ENCODE measurements at regions of chr20 and their contacts with region 1.

Region 1: DNA sequence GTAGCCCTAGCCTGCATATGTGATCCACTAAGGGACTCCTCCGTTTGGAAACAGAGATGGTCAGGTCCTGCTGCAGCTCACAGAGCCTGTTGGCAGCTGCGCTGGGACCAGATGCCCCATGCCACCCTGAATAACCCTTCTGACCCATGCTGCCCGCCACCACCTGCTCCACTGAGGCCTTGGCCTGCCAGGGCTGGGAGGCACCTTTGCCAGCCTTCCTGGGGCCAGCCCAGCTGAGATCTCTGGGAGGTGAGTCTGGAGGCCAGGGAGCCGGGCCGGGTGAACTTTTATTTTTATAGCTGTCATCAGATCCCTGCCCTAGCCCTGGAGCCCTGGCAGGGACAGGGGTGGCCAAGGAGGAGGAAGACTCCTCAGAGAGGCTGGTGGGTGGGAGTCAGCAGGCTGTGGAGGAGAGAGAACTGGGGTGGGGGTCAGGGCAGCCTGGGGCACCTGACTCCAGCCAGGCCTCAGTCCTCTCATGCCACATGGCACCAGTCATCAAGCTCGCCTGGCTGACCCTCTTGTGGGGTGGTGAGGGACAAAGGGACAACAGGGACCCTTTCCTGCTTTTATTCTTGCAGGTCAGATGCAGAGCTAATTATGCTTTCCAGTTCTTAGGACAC is 10.0 kb downstream of the CEBPB start:
- DNase-seq: no peak
- H3K4me3 ChIP-seq: no peak overlapping the region
- H3K4me3 Mint-ChIP-seq: no peak overlapping the region
- H3K27ac ChIP-seq: no peak overlapping the region
- H3K27ac Mint-ChIP-seq: peak overlapping the region in 1 of 7 donors; percentile 28
- H3K4me1 ChIP-seq: peaks cover 19 to 33% of the 10 kb centered on the region in 2 donors
- H3K4me1 Mint-ChIP-seq: peaks cover 45% of the 10 kb centered on the region
- H3K27me3 ChIP-seq: no peaks in the 10 kb centered on the region
- H3K27me3 Mint-ChIP-seq: peaks cover 0 to 2% (median 0%) of the 10 kb centered on the region in 3 donors
- CTCF ChIP-seq: no peak

Region 2: GRCh38 chr20:50215101-50215690 is 14.6 kb after region 1 on chr20:
- intact Hi-C with region 1: loop called (anchors 2 kb)
- DNase-seq: no peak
- H3K4me3 ChIP-seq: no peak overlapping the region
- H3K4me3 Mint-ChIP-seq: peak overlapping the region in 1 of 2 donors; percentile 49
- H3K27ac ChIP-seq: no peak overlapping the region
- H3K27ac Mint-ChIP-seq: peak overlapping the region in 4 of 7 donors; percentile 38 to 81 (median 63)
- H3K4me1 ChIP-seq: peaks cover 48 to 54% of the 10 kb centered on the region in 2 donors
- H3K4me1 Mint-ChIP-seq: peaks cover 71% of the 10 kb centered on the region
- H3K27me3 ChIP-seq: no peaks in the 10 kb centered on the region
- H3K27me3 Mint-ChIP-seq: peaks cover 0 to 17% (median 1%) of the 10 kb centered on the region in 3 donors
- CTCF ChIP-seq: no peak

Region 3: DNA sequence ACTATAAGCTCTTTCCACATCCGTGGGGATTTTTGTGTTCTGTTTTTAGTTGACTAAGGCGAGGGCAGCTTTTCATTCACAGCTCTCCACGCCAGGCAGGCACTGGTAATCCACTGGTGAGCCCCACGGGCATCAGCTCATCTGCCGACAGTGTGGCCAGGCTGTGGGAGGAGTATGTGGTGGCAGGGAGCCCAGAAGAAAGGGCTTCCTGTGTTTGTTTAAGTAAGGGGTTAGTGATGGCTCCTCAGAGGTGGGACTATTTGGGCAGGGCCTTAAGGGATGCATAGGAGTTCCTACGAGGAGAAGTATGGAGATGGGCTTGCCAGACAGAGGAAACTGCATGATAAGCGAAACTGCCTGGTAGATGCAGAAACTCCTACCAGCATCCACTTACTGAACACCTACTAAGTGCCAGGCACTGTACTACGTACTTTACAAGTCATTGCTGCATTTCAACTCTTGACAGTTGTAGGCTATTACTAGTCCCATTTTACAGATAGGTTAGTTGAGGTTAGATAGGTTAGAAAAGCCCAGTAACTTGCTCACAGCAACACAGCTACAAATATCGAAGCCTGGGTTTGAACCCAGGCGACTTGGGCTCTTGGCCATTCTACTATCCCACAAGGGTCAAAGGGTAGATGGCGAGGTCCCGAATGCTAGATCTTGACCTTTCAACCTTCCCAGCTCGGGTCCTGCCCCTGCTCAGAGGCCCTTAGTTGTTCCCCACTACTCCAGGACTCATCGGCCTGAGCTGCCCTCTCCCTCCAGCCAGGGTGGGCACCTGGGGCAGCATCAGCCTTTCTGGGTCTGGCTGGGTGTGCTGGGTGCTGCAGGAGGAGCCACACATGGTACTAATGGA is 45.1 kb after region 1 on chr20:
- intact Hi-C with region 1: loop called in 1 of 2 experiments (anchors 5 kb)
- DNase-seq: no peak
- H3K4me3 ChIP-seq: no peak overlapping the region
- H3K4me3 Mint-ChIP-seq: no peak overlapping the region
- H3K27ac ChIP-seq: no peak overlapping the region
- H3K27ac Mint-ChIP-seq: no peak overlapping the region
- H3K4me1 ChIP-seq: peaks cover 0 to 10% of the 10 kb centered on the region in 2 donors
- H3K4me1 Mint-ChIP-seq: peaks cover 25% of the 10 kb centered on the region
- H3K27me3 ChIP-seq: no peaks in the 10 kb centered on the region
- H3K27me3 Mint-ChIP-seq: peaks cover 4 to 9% (median 5%) of the 10 kb centered on the region in 3 donors
- CTCF ChIP-seq: no peak